HCT116 (cell line): ENCODE measurements at regions of chr19 and their contacts with region 1.

Region 1: GRCh38 chr19:45245334-45245787 is at the start of gene EXOC3L2:
- DNase-seq: no peak
- ATAC-seq: no peak
- H3K4me3 ChIP-seq: no peak within 1 kb of the TSS
- H3K27ac ChIP-seq: no peak within 1 kb of the TSS
- H3K4me1 ChIP-seq: peaks cover 4 to 11% of the 10 kb centered on the region in 2 experiments; a peak in 3 of 4 replicates
- H3K27me3 ChIP-seq: no peaks in the 10 kb centered on the region
- CTCF ChIP-seq: no peak
- POLR2A ChIP-seq: no peak
- RAD21 ChIP-seq: no peak
- total RNA-seq, gene EXOC3L2: not detected

Region 2: GRCh38 chr19:45187421-45188100 is 57.8 kb before region 1 on chr19:
- CTCF ChIA-PET with region 1: no interaction called
- POLR2A ChIA-PET with region 1: no interaction called
- RAD21 ChIA-PET with region 1: no interaction called
- intact Hi-C with region 1: loop called (anchors 10 kb)
- DNase-seq: no peak
- ATAC-seq: peak; percentile 85
- H3K4me3 ChIP-seq: no peak overlapping the region
- H3K27ac ChIP-seq: no peak overlapping the region
- H3K4me1 ChIP-seq: peaks cover 5 to 9% of the 10 kb centered on the region in 2 experiments; a peak in 3 of 4 replicates
- H3K27me3 ChIP-seq: no peaks in the 10 kb centered on the region
- CTCF ChIP-seq: peak; percentile 53 to 70 (median 67); a peak in 5 of 6 replicates
- POLR2A ChIP-seq: no peak
- RAD21 ChIP-seq: no peak; the same call in none of the 2 replicates

Region 3: GRCh38 chr19:45311621-45312020 is 66.3 kb after region 1 on chr19:
- CTCF ChIA-PET with region 1: no interaction called
- POLR2A ChIA-PET with region 1: no interaction called
- RAD21 ChIA-PET with region 1: no interaction called
- intact Hi-C with region 1: no loop called
- DNase-seq: no peak
- ATAC-seq: no peak
- H3K4me3 ChIP-seq: no peak overlapping the region
- H3K27ac ChIP-seq: no peak overlapping the region
- H3K4me1 ChIP-seq: peaks cover 10 to 12% of the 10 kb centered on the region in 2 experiments
- H3K27me3 ChIP-seq: no peaks in the 10 kb centered on the region
- CTCF ChIP-seq: no peak
- POLR2A ChIP-seq: no peak
- RAD21 ChIP-seq: no peak